ENCODE measurements at regions of chr10 and their contacts with region 1.

Region 1: DNA sequence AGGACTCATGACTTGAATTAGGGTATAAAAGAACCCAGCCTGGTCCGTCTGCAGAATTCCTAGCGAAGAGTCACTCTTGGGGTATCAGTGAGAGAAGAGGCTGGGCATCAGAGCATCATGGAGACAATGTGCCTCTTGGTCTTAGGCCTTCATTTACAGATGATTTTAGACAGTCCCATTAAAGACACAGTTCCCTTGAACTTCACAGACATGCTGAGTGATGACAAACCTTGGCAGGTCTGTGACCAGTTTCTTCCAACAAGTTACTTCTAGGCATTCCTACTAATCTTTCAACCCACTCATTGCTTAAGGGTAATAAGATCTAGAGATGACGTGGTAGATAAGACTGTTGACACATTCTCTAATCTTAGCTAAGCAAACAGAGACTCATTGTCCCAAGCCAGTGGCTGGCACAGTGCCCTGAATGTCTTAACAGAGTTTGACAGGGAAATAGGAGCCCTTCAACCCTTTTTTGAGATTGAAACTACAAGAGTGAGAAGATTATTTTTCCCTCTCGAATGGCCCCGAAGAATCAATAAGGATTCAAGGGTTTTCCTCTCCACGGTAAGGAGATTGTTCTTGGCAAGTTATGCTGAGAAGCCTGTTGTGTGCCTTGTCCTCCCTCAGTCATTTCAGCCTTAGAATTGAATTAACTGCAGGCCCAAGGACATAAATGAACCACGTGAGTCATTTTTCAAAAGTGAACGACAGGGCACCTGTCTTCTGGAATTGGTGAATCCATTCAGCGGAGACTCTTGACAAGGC is 281.1 kb downstream of the CCDC3 start:
- DNase-seq: peak in 3 of 4 donors; percentile 55 to 87 (median 86)
- ATAC-seq: peak; percentile 86
- H3K4me3 ChIP-seq: no peak overlapping the region
- H3K27ac ChIP-seq: peak overlapping the region; percentile 11 to 39
- H3K4me1 ChIP-seq: peaks cover 16% of the 10 kb centered on the region in 2 donors
- H3K27me3 ChIP-seq: peaks cover 0 to 25% of the 10 kb centered on the region in 2 donors
- CTCF ChIP-seq: no peak

Region 2: GRCh38 chr10:12825260-12825849 is 105.0 kb after region 1 on chr10:
- intact Hi-C with region 1: no loop called
- DNase-seq: no peak
- ATAC-seq: no peak
- H3K4me3 ChIP-seq: no peak overlapping the region
- H3K27ac ChIP-seq: no peak overlapping the region
- H3K4me1 ChIP-seq: no peaks in the 10 kb centered on the region
- H3K27me3 ChIP-seq: no peaks in the 10 kb centered on the region
- CTCF ChIP-seq: no peak

Region 3: DNA sequence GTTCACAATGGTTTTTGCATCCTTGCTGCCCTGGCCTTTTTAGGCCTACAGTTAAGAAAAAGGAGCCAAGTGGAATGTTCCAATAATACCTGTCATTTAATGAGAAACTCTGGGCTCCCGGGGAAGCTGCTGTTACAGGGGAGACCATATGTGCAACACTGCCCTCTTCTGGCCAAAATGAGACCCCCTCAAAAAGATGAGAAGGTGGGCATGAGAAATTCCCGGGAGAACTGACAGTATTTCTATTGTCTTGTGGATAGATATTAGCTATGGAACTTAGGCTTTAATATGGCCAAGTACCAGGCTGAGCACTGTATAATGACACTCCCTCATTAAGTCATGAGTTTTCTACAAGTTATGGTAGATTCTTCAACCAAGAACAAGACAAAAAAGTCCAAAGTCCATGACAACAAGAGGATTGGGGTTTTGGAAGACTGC is 181.8 kb after region 1 on chr10:
- intact Hi-C with region 1: loop called in 1 of 2 experiments (anchors 10 kb)
- DNase-seq: peak in 2 of 4 donors; percentile 57 to 74
- ATAC-seq: peak; percentile 75
- H3K4me3 ChIP-seq: no peak overlapping the region
- H3K27ac ChIP-seq: no peak overlapping the region
- H3K4me1 ChIP-seq: no peaks in the 10 kb centered on the region
- H3K27me3 ChIP-seq: peaks cover 0 to 9% of the 10 kb centered on the region in 2 donors
- CTCF ChIP-seq: peak; percentile 62 to 70